OCI-LY7 (cell line): ENCODE measurements at regions of chr3 and their contacts with region 1.

Region 1: GRCh38 chr3:168186293-168186983 is 90.7 kb upstream of the GOLIM4 start:
- DNase-seq: no peak
- H3K4me3 ChIP-seq: no peak overlapping the region
- H3K27ac ChIP-seq: no peak overlapping the region
- H3K4me1 ChIP-seq: no peaks in the 10 kb centered on the region
- CTCF ChIP-seq: no peak

Region 2: DNA sequence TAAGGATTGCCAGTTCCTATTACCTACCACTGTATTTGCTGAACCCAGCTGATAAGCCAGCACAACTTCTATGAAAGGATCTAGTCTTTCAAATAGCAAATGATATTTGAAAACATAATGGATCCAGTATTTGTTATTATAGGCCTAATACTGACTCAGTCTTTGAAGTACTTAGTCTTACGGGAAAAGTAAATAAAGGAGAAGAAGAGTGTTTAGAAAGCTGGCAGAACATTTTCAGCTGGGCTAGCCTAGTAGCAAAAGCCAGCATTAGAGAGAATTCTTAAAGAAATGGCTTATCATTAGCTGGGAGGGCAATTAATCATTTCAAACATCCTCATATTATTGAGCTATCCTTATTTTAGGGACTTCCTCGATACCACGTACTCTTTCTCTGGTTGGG is 10.7 kb after region 1 on chr3:
- CTCF ChIA-PET with region 1: no interaction called
- POLR2A ChIA-PET with region 1: interaction called, 10 read pairs
- intact Hi-C with region 1: no loop called
- DNase-seq: no peak
- H3K4me3 ChIP-seq: no peak overlapping the region
- H3K27ac ChIP-seq: no peak overlapping the region
- H3K4me1 ChIP-seq: no peaks in the 10 kb centered on the region
- CTCF ChIP-seq: no peak

Region 3: DNA sequence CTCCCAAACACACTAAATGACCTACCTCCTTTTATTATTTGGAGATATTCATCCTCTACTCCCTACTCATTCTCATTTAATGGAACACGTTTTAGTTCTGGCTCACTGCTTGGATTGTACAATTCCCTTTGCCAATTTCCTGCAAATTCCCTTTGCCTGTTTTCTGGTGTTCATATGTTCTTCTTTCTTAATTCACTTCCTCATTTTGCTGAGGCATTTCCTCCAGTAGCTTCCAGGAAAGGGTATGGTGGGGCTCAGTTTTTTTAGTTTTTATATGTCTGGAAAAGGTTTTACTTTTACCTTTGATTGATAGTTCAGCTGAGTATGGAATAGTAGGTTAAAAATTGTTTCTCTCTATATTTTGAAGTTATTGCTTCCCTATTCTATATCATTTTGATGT is 52.8 kb after region 1 on chr3:
- CTCF ChIA-PET with region 1: no interaction called
- POLR2A ChIA-PET with region 1: no interaction called
- intact Hi-C with region 1: no loop called
- DNase-seq: no peak
- H3K4me3 ChIP-seq: no peak overlapping the region
- H3K27ac ChIP-seq: no peak overlapping the region
- H3K4me1 ChIP-seq: no peaks in the 10 kb centered on the region
- CTCF ChIP-seq: no peak